ENCODE measurements at regions of chr11 and their contacts with region 1.

Region 1: GRCh38 chr11:12963792-12964536 is 45.2 kb upstream of the RASSF10 start:
- DNase-seq: peak; percentile 47 to 89
- H3K4me3 ChIP-seq: no peak overlapping the region
- H3K4me1 ChIP-seq: 0 out of 2 replicates have a peak, but pooled peaks cover 4% of the 10 kb centered on the region
- H3K27me3 ChIP-seq: peaks cover 4% of the 10 kb centered on the region; the same call in 1 of the 2 replicates

Region 2: DNA sequence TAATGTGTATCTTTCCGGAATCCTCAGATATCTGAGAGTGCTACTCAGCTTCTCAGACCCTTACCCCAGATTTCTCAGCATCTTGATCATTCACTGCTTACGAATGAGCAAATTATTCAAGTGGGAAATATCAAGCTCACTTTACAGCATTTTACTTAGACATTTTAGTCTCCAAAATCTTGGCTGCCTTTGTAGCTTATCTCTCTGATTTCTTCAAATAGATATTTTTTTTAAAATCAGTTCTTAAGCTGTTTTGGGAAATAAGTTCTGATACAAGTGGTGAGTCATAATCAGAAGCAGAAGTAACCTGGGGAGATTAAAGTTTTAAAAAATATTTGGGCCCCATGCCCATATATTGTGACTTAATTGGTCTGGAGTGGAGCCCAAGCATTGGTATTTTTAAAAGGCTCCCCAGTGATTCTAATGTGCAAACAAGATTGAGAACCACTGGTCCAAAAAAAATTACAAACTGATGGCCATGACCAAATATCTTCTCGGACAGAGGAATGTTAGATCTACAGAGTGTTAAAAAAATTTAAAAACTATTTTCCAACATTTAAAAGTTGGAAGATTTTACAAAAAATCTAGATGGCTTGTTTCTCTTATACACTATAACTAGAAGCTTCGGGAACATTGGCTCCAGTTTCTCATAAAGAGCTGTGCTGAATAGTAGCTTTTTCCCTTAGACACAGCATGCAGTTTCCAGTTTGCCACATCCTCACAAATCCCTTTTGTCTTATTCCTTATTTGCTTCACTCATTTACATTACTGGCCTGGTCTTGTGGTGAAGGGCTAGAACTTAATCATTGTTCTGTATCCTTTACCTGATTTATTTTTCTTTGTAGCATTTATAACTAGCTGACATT is 225.8 kb after region 1 on chr11:
- in situ Hi-C with region 1: loop called (anchors 10 kb)
- DNase-seq: no peak
- H3K4me3 ChIP-seq: no peak overlapping the region
- H3K4me1 ChIP-seq: no peaks in the 10 kb centered on the region
- H3K27me3 ChIP-seq: no peaks in the 10 kb centered on the region

Region 3: GRCh38 chr11:13343931-13344717 is 380.2 kb after region 1 on chr11:
- in situ Hi-C with region 1: loop called (anchors 10 kb)
- DNase-seq: peak; percentile 58 to 82
- H3K4me3 ChIP-seq: no peak overlapping the region
- H3K4me1 ChIP-seq: no peaks in the 10 kb centered on the region
- H3K27me3 ChIP-seq: no peaks in the 10 kb centered on the region